WTC11 (cell line): ENCODE measurements at regions of chr7 and their contacts with region 1.

Region 1: DNA sequence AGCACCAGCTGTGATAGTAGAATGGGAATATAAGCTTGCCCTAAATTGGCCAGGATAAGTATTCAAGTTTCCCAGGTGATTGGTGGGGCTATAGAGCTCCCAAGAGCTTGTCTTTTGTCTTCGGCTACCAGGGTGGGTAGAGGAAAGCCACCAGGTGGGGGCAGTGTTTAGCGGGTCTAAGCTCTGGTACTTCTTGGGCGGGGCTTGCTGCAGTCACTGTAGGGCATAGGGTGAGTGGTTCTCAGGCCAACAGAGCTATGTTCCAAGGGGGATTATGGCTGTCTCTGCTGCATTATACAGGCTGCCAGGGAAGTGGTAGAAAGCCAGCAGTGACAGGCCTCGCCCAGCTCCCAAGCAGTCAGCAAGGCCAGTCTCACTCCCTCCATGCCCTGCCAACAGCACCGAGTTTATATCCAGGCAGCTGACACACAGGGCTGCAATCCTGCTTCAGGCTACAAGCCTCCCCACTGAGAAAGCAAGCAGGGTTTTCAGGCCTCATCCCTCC is 110.7 kb downstream of the ZNF467 start:
- DNase-seq: peak; percentile 92
- ATAC-seq: peak; percentile 99
- H3K4me3 Mint-ChIP-seq: no peak overlapping the region
- H3K27ac Mint-ChIP-seq: no peak overlapping the region
- H3K4me1 Mint-ChIP-seq: peaks cover 4% of the 10 kb centered on the region; the same call in 1 of the 2 replicates
- H3K27me3 Mint-ChIP-seq: peaks cover 32% of the 10 kb centered on the region
- CTCF ChIP-seq: peak; percentile 50

Region 2: GRCh38 chr7:149547126-149547525 is 115.5 kb before region 1 on chr7:
- CTCF ChIA-PET with region 1: no interaction called
- POLR2A ChIA-PET with region 1: no interaction called
- DNase-seq: no peak
- ATAC-seq: peak; percentile 62
- H3K4me3 Mint-ChIP-seq: no peak overlapping the region
- H3K27ac Mint-ChIP-seq: no peak overlapping the region
- H3K4me1 Mint-ChIP-seq: no peaks in the 10 kb centered on the region
- H3K27me3 Mint-ChIP-seq: peaks cover 2% of the 10 kb centered on the region; the same call in 1 of the 2 replicates
- CTCF ChIP-seq: no peak

Region 3: GRCh38 chr7:149635561-149636329 is 26.9 kb before region 1 on chr7:
- CTCF ChIA-PET with region 1: interaction called, 25 read pairs
- POLR2A ChIA-PET with region 1: no interaction called
- DNase-seq: peak; percentile 76
- ATAC-seq: peak; percentile 97
- H3K4me3 Mint-ChIP-seq: peak overlapping the region; percentile 15; the same call in 1 of the 2 replicates
- H3K27ac Mint-ChIP-seq: 0 out of 2 replicates have a peak overlapping the region, but pooled peaks have one; percentile 50
- H3K4me1 Mint-ChIP-seq: peaks cover 4% of the 10 kb centered on the region; the same call in 1 of the 2 replicates
- H3K27me3 Mint-ChIP-seq: peaks cover 18% of the 10 kb centered on the region
- CTCF ChIP-seq: no peak

Region 4: GRCh38 chr7:149701495-149702240 is 39.0 kb after region 1 on chr7:
- CTCF ChIA-PET with region 1: interaction called, 164 read pairs
- POLR2A ChIA-PET with region 1: interaction called, 4 read pairs
- DNase-seq: no peak
- ATAC-seq: no peak
- H3K4me3 Mint-ChIP-seq: no peak overlapping the region
- H3K27ac Mint-ChIP-seq: no peak overlapping the region
- H3K4me1 Mint-ChIP-seq: peaks cover 22% of the 10 kb centered on the region
- H3K27me3 Mint-ChIP-seq: peaks cover 2% of the 10 kb centered on the region; the same call in 1 of the 2 replicates
- CTCF ChIP-seq: no peak

Region 5: DNA sequence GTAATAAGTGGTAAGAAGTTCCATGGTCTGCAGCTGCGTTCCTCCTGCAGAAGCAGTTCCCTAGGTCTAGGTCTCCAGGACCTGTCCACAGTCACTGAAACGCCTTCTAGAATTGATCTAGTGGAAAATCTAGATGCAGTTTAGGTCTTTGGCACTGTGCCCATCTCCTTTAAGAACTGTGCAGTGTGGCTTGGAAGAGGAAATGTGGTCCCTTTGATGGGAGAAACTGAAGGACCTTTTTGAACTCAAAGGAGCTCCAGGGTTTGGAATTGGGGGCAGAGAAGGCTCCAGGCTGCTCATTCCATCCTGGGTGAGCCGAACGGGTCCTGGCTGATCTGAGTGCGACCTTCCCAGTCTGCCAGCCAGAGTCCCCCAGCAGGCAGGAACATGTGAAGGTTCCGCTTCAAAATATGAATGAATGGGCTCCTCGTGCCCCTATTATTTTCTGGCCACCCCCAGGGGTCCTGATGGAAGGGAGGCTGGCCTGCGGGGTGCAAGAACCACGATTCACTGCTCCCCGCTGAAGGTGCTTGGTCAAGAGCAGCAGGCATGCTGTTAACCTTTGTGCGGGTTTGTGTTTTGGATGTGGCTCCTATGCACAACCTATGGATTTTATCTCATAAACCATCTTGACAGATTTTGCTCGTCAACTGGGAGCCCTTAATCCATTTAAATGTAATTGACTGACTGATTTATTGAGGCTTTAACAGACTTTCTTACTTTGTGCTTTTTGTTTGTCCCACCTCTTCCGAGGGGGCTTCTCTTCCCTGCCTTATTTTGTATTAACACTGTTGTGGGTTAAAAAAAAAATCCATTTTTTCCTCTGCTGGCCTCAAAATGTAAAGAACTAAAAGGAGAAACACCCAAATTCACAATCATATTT is 74.1 kb after region 1 on chr7:
- CTCF ChIA-PET with region 1: interaction called, 140 read pairs
- POLR2A ChIA-PET with region 1: interaction called, 5 read pairs
- DNase-seq: no peak
- ATAC-seq: no peak
- H3K4me3 Mint-ChIP-seq: no peak overlapping the region
- H3K27ac Mint-ChIP-seq: no peak overlapping the region
- H3K4me1 Mint-ChIP-seq: no peaks in the 10 kb centered on the region; the same call in 1 of the 2 replicates
- H3K27me3 Mint-ChIP-seq: peaks cover 8% of the 10 kb centered on the region
- CTCF ChIP-seq: no peak

Region 6: GRCh38 chr7:149759111-149759860 is 96.6 kb after region 1 on chr7:
- CTCF ChIA-PET with region 1: interaction called, 37 read pairs
- POLR2A ChIA-PET with region 1: no interaction called
- DNase-seq: no peak
- ATAC-seq: peak; percentile 58
- H3K4me3 Mint-ChIP-seq: no peak overlapping the region
- H3K27ac Mint-ChIP-seq: no peak overlapping the region
- H3K4me1 Mint-ChIP-seq: peaks cover 9% of the 10 kb centered on the region
- H3K27me3 Mint-ChIP-seq: peaks cover 74% of the 10 kb centered on the region
- CTCF ChIP-seq: no peak

Region 7: DNA sequence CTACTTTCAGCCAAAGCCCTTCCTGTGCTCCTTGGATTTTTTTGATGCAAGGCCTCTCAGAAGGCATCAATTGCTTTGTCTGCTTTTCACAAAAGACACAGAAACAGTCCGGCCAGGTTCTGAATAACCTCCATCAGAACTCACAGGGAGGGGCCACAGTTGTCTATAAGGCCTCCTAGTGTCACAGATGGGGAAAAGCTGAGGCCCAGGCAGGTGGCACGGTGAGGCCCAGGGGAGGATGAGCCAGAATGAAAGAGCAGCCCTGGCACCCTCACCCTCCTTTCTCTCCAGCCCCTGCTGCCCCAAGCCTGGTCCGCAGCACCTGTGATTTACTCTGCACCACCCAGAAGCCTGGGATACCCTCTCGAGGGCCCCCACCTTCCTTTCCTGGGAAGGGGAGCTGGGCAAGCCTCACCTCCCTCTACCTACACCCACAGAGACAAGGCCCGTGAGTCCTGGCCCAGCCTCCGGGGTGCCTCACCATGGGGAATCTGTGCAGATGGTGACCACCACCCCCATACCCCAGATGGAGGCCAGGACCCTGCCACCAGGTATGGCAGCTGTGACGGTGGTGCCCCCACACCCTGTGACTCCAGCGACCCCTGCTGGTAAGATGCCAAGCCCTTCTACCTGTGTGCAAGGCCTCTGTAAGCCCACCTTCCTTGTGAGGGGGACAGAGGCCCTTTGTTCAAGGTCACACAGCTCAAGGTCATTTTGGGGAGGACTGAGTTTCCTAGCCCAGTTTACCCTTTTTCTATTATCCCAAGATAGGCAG is 136.9 kb after region 1 on chr7:
- CTCF ChIA-PET with region 1: interaction called, 15 read pairs
- POLR2A ChIA-PET with region 1: no interaction called
- DNase-seq: peak; percentile 83
- ATAC-seq: peak; percentile 80
- H3K4me3 Mint-ChIP-seq: no peak overlapping the region
- H3K27ac Mint-ChIP-seq: no peak overlapping the region
- H3K4me1 Mint-ChIP-seq: no peaks in the 10 kb centered on the region
- H3K27me3 Mint-ChIP-seq: no peaks in the 10 kb centered on the region
- CTCF ChIP-seq: peak; percentile 67